GM10248 (cell line): ENCODE measurements at regions of chr16 and their contacts with region 1.

Region 1: DNA sequence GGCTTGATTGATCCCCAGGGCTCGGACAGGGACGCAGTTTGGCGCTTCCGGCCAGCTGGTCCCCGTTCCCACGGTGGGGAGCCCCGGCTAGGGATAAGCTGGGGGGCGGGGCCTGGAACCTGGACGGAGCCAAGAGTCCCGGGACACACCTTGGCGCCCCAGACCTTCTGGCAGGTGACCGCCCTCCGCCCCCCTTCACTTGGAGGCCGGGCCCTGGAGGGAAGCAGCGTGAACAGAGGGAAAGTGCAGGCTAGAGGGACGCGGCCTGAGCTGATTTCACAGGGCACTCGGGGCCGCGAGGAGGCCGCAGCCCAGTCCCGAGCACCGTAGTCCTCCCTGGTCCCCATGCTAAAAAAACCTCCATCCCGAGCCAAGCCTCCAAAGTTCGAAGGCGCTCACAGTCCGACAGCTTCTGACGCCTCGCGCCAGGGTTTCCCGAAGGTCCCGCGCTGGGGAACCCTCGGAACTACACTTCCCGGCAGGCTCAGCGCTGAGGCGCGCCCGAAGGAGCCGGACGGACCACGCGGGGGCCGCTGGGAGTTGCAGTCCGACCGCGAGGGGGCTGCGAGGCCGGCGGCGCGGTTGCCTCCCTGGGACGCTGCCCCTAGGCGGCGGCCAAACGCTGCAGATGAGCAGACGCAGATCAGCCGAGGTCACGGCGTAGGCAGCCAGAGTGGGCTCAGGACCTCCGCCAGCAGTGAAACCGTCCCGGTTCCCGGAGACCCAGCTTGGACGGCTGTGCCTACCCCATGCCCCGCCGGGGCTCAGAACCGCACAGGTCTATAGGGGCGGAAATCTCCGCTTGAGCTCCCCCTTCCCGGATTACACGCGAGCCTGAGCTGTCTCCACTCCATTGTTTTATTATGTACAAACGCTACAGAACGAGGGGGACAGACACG is at the start of gene TBX6:
- DNase-seq: peak; percentile 93
- CTCF ChIP-seq: peak; percentile 90

Region 2: GRCh38 chr16:30032083-30032819 is 59.5 kb before region 1 on chr16:
- CTCF ChIA-PET with region 1: interaction called, 11 read pairs
- POLR2A ChIA-PET with region 1: no interaction called
- DNase-seq: peak; percentile 83
- CTCF ChIP-seq: peak; percentile 90

Region 3: DNA sequence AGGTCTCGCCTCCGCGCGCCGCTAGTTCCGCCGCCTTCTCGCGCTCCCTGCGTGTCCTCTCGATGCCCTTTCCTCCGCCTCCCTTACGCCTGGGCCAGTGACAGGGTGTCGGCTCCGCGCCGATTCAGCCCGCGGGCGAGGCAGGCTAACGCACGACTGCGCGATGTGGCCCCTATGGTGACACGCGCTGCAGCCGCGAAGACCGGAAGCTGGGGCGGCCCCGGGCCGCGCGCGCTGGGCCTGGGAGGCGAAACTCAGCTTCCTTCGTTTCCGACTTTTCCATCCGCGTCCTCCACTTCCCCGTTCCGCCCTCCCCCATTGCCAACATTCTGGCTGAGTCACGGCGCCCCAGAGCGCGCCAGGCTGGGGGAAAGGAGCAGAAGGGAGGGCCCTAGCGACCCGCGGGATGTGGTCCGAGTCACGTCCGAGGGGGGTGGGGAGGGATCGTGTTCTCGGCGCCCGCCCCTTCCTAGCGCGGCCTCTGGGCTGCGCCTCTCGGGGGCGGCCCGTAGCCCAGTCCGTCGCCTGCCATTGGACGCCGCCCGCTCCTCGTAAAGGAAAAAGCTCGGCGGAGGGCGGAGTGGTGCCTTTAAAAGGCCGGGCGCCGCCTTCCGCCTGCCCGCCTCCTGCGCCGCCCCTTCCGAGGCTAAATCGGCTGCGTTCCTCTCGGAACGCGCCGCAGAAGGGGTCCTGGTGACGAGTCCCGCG is 26.4 kb before region 1 on chr16 and contains the start of gene ALDOA:
- CTCF ChIA-PET with region 1: interaction called, 21 read pairs
- POLR2A ChIA-PET with region 1: interaction called, 13 read pairs
- DNase-seq: peak; percentile 97
- CTCF ChIP-seq: no peak

Region 4: GRCh38 chr16:30104494-30104968 is 12.8 kb after region 1 on chr16:
- CTCF ChIA-PET with region 1: interaction called, 24 read pairs
- POLR2A ChIA-PET with region 1: no interaction called
- DNase-seq: no peak
- CTCF ChIP-seq: no peak

Region 5: GRCh38 chr16:30122604-30123160 is 31.0 kb after region 1 on chr16:
- CTCF ChIA-PET with region 1: interaction called, 18 read pairs
- POLR2A ChIA-PET with region 1: no interaction called
- DNase-seq: no peak
- CTCF ChIP-seq: no peak